MCF 10A (cell line): ENCODE measurements at regions of chr5 and their contacts with region 1.

Region 1: GRCh38 chr5:142529626-142530278 is 156.1 kb downstream of the FGF1 start:
- DNase-seq: peak; percentile 86
- H3K4me3 Mint-ChIP-seq: no peak overlapping the region
- H3K27ac Mint-ChIP-seq: peak overlapping the region; percentile 72
- H3K4me1 Mint-ChIP-seq: peaks cover 21% of the 10 kb centered on the region
- H3K27me3 Mint-ChIP-seq: no peaks in the 10 kb centered on the region
- CTCF ChIP-seq: no peak

Region 2: DNA sequence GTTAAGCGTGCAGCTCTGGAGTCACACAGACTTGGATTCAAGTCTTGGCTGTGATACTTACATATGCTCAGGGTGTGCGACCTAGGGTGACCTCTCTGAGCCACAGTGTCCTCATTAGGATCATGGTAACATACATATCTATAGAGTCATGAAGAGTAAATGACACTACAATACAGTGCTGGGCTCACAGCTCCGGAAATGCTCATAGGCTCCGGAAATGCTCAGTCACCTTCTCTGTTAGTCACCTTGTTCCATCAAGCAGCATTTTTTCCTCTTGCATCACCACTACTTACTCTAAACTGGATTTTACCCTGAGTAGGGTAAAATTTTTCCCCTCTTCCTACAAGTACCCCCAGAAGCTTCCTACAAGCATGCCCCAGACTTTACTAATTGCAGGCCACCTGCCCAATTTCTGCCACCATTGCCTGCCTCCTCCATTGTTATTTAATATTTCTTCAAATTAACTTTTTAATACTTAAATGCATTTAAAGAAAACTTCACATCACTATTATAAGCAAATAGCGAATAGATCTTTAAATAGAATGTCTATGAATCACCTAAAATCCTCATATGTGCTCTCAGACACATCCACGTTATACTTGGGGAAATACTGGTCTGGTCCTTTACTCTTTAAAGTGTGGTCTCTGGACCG is 57.3 kb before region 1 on chr5:
- CTCF ChIA-PET with region 1: no interaction called
- POLR2A ChIA-PET with region 1: interaction called, 3 read pairs
- intact Hi-C with region 1: loop called (anchors 2 kb)
- DNase-seq: peak; percentile 91
- H3K4me3 Mint-ChIP-seq: no peak overlapping the region
- H3K27ac Mint-ChIP-seq: peak overlapping the region; percentile 84
- H3K4me1 Mint-ChIP-seq: peaks cover 30% of the 10 kb centered on the region
- H3K27me3 Mint-ChIP-seq: no peaks in the 10 kb centered on the region
- CTCF ChIP-seq: no peak

Region 3: GRCh38 chr5:142568283-142568995 is 38.7 kb after region 1 on chr5:
- CTCF ChIA-PET with region 1: no interaction called
- POLR2A ChIA-PET with region 1: no interaction called
- intact Hi-C with region 1: no loop called
- DNase-seq: no peak
- H3K4me3 Mint-ChIP-seq: no peak overlapping the region
- H3K27ac Mint-ChIP-seq: peak overlapping the region; percentile 68
- H3K4me1 Mint-ChIP-seq: no peaks in the 10 kb centered on the region
- H3K27me3 Mint-ChIP-seq: no peaks in the 10 kb centered on the region
- CTCF ChIP-seq: no peak